Right cardiac atrium (tissue), 5 donors: ENCODE measurements at regions of chr22 and their contacts with region 1.

Region 1: GRCh38 chr22:31661851-31662656 is at the start of gene PISD:
- DNase-seq: peak; percentile 95 to 99 (median 98)
- ATAC-seq: peak; percentile 99
- H3K4me3 ChIP-seq: peak within 1 kb of the TSS; percentile 85
- H3K27ac ChIP-seq: no peak within 1 kb of the TSS
- H3K4me1 ChIP-seq: no peaks in the 10 kb centered on the region
- H3K27me3 ChIP-seq: no peaks in the 10 kb centered on the region
- total RNA-seq, gene PISD: 18.6 to 33.5 (median 19.7) TPM

Region 2: GRCh38 chr22:31749636-31750364 is 87.7 kb after region 1 on chr22 and contains the start of gene PRR14L:
- intact Hi-C with region 1: loop called in 1 of 4 experiments (anchors 10 kb)
- DNase-seq: peak; percentile 98 to 99 (median 99)
- ATAC-seq: peak; percentile 93 to 94
- H3K4me3 ChIP-seq: peak within 1 kb of the TSS; percentile 79
- H3K27ac ChIP-seq: peak within 1 kb of the TSS; percentile 68
- H3K4me1 ChIP-seq: peaks cover 7% of the 10 kb centered on the region
- H3K27me3 ChIP-seq: no peaks in the 10 kb centered on the region
- total RNA-seq, gene PRR14L: 16.4 to 23.4 (median 22.8) TPM

Region 3: DNA sequence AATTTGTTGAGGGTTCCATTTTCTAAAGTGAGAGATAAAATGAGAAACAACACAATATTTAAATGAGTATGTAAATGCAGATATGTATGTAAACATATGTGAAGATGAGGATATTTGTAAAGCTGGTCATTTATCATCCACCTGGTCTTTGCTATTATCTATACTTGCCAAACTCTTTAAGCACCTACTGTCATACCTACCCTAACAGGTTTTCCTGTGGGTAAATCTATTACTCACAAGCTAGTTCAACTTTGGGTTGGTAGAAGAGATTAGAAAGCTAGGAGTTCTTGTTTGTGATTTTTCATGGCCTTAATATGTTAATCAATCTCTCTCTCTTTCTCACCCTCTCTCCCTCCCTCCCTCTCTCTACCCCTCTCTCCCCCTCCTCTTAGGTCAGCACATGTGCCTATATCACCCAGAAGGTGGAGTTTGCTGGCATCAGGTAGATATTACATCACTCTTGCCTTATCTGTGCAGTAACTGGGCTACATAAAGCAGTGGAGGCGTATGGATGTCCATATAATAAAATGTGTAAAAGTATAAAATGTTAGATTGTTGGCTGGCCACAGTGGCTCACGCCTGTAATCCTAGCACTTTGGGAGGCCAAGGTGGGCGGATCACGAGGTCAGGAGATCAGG is 106.5 kb after region 1 on chr22:
- intact Hi-C with region 1: no loop called
- DNase-seq: no peak
- ATAC-seq: no peak
- H3K4me3 ChIP-seq: no peak overlapping the region
- H3K27ac ChIP-seq: no peak overlapping the region
- H3K4me1 ChIP-seq: no peaks in the 10 kb centered on the region
- H3K27me3 ChIP-seq: no peaks in the 10 kb centered on the region

Region 4: GRCh38 chr22:31943976-31944699 is 282.1 kb after region 1 on chr22 and contains the start of gene YWHAH:
- intact Hi-C with region 1: loop called in 1 of 4 experiments (anchors 10 kb)
- DNase-seq: peak; percentile 96 to 99 (median 99)
- ATAC-seq: peak; percentile 93 to 95
- H3K4me3 ChIP-seq: peak within 1 kb of the TSS; percentile 89
- H3K27ac ChIP-seq: peak within 1 kb of the TSS; percentile 96
- H3K4me1 ChIP-seq: peaks cover 2% of the 10 kb centered on the region
- H3K27me3 ChIP-seq: no peaks in the 10 kb centered on the region
- total RNA-seq, gene YWHAH: 69.6 to 103 (median 86.2) TPM